ENCODE measurements at regions of chr20 and their contacts with region 1.

Region 1: DNA sequence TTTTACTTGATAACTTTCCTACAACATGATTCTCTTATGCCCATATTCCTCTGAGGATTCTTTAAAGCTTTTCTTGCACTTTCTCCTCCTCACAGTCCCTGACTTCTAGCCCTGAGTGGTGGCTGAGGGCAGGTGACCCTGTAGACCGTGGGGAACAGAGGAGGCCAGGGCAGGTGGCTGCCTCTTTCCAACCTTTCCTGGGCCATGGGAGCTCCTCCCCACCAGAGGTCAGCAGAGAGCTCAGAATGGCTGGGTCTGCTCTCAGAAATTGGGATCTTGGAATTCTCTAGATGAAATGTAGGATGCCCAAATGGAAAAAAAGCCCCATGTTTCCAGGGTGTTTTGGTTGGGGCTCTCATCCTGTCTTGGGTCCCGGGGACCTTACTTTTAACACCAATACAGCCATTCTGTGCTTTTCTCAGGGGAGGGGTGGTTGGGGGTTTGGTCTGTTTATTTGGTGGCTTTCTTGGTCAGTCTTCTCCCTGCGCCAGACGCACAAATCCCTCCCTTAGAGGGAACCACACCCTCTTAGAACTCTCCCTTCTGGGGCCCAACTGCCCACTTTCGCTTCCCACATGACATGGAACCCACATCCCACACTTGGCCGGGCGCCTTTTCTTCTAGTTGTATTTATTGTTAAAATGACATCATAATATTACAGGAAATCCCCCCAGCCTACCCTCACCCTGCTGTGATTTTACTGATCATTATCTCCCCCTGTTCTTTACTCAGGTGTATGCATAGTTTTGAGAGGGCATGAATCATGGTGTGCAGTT is 17.9 kb downstream of the GNAS start:
- DNase-seq: peak; percentile 68
- ATAC-seq: peak; percentile 58

Region 2: GRCh38 chr20:59074445-59074844 is 204.0 kb after region 1 on chr20:
- intact Hi-C with region 1: loop called (anchors 10 kb)
- DNase-seq: no peak
- ATAC-seq: no peak

Region 3: DNA sequence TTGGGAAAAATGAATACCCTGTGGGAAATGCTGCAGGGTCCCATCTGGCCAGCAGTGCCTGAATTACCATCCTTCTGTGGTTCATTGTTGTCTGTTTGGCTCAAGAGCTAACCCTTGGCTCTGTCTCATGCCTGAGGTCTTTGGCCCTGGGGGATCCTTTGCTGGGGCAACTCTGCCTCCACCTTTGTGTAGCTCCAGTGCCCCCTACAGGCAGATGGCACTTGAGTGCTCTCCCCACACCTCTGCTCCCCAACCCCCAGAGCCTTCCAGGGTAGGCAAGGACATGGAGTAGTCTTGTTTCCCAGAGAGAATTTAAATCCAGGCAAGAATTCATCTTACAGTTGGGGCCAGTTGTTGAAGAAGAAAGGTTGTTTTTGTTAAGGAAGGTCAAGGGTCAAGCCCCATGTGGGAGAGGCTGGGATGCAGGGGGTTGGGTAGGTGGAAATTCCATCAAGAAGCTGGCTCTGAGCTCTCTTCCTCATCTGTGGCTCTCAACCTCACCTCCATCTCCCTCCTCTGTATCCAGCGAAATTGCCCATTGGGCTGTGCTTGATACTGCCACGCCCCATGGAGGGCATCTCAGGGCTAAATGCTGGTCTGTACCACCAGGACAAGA is 337.4 kb after region 1 on chr20:
- intact Hi-C with region 1: loop called (anchors 1 kb)
- DNase-seq: peak; percentile 75
- ATAC-seq: peak; percentile 70

Region 4: GRCh38 chr20:59222253-59223181 is 352.1 kb after region 1 on chr20:
- intact Hi-C with region 1: loop called (anchors 1 kb)
- DNase-seq: peak; percentile 89
- ATAC-seq: peak; percentile 88

Region 5: DNA sequence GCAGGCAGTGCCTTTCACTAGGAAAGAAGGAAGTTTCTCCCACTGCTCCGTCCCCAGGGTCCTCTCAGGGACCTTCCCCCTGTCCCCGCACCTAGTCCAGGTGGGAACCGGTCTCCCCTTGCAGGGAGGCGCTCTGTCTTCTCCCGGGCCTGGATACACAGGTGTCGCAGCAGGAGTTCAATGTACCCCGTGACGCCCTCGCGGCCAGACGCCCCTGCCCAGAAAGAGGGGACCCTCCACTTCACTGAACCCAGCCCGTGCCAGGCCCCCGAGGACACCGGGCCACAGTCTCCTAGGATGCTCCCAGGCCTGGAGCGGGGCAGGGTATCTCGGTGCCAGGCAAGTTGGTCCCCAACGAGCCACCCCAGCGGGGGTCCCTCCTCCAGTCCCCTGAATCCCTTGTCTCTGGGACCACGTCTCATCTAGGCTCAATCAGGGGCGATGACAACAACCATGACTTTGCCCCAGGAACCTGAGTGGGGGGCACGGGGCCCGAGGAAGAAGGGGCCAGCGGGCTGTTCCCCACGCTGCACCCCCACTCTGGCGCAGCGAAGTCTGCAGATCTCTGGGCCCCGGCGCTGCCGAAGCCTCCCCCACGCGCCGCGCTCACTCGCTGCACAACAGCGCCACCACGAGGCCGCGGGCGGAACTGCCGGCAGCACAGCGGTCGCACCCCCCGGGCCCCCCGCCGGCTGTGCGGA is 533.0 kb after region 1 on chr20:
- intact Hi-C with region 1: loop called (anchors 2 kb)
- DNase-seq: no peak
- ATAC-seq: no peak

Region 6: GRCh38 chr20:59455402-59456341 is 585.2 kb after region 1 on chr20:
- intact Hi-C with region 1: loop called (anchors 5 kb)
- DNase-seq: no peak
- ATAC-seq: peak; percentile 62

Region 7: DNA sequence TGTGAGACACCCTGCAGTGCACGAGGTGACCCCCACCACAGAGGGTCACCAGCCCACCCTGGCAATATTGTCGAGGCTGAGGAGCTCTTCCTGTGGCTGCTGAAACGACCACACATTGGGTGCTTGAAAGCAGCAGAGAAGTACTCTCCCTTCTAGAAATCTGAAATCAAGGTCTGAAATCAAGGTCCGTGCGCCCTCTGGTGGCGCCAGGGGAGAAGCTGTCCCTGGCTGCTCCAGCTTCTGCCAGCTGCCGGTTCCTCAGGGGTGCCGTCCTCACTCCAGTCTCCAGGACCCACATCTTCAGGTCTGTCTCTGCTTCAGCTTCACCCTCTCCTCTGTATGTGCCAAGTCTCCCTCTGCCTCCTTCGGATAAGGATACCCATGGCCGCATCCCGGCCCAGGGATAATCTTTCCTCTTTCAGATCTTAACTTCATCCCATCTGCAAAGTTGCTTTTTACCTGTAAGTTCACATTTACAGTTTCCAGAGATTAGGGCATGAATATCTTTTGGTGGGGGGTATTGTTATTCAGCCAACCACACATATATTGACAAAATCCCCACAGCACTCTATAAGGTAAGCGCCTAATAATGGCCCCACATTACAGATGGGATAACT is 625.6 kb after region 1 on chr20:
- intact Hi-C with region 1: loop called (anchors 2 kb)
- DNase-seq: no peak
- ATAC-seq: peak; percentile 60